Dorsolateral prefrontal cortex (tissue), 120 donors: ENCODE measurements at regions of chr15 and their contacts with region 1.

Region 1: DNA sequence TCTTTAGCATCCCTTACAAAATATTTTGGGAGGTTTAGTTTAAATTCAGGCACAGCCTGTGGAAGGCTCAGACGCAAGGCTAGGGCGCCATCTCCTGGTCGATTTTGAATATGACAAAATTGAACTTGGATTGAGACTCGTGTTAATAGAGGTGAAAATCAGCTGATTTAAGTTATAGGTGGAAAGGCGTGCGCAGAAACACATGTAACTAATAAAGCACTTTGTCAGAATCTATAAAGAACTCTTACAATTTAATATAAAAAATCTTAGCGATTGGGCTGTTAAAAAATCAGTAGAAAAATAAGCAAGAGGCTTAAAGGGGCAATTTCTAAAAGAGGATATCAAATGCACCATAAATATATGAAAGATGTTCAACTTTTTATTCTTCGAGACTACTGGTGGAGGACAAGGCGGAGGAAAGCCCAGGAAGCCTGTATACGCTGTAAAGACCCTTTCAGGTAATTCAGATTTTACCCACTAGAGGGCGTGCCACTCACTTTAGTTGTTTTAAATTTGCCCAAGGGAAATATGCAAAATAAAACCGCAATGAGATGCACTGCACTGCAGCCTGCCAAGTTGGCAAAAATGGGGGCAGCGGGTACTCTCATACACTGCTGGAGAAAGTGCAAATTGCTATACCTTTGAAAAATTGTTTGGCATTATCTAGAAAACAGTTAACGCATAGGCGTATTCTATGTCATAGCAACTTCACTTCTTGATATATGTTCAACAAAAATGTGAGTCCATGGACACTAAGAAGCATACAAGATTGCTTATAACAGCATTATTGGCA is 64.7 kb downstream of the SLC30A4 start:
- DNase-seq: peak in 7 of 10 donors; percentile 49 to 81 (median 61)
- H3K4me3 ChIP-seq: peak overlapping the region; percentile 34 to 77 (median 61)
- H3K27ac ChIP-seq: peak overlapping the region; percentile 1 to 97 (median 85)
- H3K27me3 ChIP-seq: no peaks in the 10 kb centered on the region
- CTCF ChIP-seq: peak; percentile 61 to 98 (median 84)

Region 2: GRCh38 chr15:45166834-45167630 is 290.8 kb before region 1 on chr15:
- intact Hi-C with region 1: loop called in 1 of 2 experiments (anchors 2 kb)
- DNase-seq: peak; percentile 59 to 89 (median 77)
- H3K4me3 ChIP-seq: peak overlapping the region; percentile 59 to 91 (median 75)
- H3K27ac ChIP-seq: peak overlapping the region; percentile 96 to 100 (median 99)
- H3K27me3 ChIP-seq: no peaks in the 10 kb centered on the region
- CTCF ChIP-seq: peak in 54 of 56 donors; percentile 18 to 70 (median 48)

Region 3: GRCh38 chr15:45307230-45307924 is 150.5 kb before region 1 on chr15:
- intact Hi-C with region 1: loop called in 1 of 2 experiments (anchors 10 kb)
- DNase-seq: no peak
- H3K4me3 ChIP-seq: peak overlapping the region in 50 of 59 donors; percentile 5 to 57 (median 38)
- H3K27ac ChIP-seq: peak overlapping the region in 41 of 59 donors; percentile 1 to 81 (median 46)
- H3K27me3 ChIP-seq: peaks cover 0 to 6% (median 0%) of the 10 kb centered on the region in 45 donors
- CTCF ChIP-seq: peak; percentile 55 to 85 (median 74)

Region 4: DNA sequence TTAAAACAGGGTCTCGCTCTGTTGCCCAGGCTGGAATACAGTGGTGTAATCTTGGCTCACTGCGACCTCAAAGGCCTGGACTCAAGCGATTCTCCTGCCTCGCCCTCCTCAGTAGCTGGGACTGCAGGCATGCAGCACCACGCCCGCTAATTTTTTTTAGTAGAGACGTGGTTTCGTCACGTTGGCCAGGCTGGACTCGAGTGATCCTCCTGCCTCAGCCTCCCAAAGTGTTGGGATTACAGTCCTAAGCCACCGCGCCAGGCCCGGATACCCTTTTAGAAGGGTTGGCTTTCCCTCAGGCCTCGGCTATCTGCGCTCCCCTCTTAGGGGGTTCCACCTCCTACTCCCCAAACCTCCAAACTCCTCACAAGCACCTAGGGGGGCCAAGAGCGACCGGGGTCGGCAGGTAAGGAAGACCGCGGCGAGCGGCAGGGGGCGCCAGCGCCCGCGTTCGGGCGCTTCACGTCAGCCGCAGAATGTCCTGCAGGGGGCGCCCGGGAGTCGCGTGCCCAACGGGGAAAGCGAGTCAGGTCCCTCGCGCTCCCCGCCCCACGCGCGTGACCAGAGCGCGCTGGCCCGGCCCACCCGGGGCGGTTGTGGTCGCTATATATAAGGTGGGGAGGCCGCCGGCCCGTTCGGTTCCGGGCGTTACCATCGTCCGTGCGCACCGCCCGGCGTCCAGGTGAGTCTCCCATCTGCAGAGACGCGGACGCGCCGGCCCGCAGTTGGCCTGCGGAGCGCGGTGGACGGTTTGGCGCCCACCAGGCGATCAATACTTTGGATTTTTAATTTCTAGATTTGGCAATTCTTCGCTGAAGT is 27.7 kb before region 1 on chr15:
- intact Hi-C with region 1: loop called in 1 of 2 experiments (anchors 2 kb)
- DNase-seq: peak in 7 of 10 donors; percentile 16 to 61 (median 45)
- H3K4me3 ChIP-seq: peak overlapping the region; percentile 9 to 67 (median 47)
- H3K27ac ChIP-seq: no peak overlapping the region
- H3K27me3 ChIP-seq: no peaks in the 10 kb centered on the region
- CTCF ChIP-seq: peak; percentile 39 to 99 (median 94)

Region 5: DNA sequence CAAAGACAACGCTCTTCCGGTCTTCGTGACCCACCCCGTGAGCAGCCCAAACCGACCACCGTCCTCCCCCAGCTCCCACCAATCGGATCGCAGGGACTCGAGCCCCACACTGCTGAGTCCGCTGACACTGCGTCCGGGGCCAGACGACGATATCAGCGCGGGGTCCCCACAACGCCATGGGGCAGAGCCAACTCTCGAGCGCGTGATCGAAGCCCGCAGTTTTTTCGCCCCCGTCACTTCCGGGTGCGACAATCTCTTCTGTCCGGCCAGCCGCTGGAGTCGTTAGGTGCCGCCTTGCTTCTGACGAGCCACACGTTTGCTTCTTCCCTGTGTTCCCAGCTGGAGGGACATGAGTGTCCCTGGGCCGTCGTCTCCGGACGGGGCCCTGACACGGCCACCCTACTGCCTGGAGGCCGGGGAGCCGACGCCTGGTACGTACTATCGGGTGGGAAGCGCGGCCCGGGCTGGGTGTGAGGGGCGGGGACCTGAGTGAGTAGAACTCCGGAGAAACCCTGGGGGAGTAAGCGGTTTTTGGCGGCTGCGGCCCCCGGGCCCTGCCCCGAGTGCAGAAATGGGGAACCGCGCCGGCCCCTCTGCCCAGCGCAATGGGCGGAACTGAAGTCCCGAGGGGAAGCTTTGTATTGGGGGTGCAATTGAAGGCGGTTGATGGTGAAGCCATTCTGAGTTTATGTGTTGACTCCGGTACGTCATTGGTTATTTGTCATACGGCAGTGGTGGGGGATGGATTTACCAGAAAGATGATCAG is 129.4 kb after region 1 on chr15 and contains the start of gene BLOC1S6:
- intact Hi-C with region 1: loop called (anchors 1 to 2 kb)
- DNase-seq: peak; percentile 84 to 94 (median 92)
- H3K4me3 ChIP-seq: peak within 1 kb of the TSS; percentile 68 to 99 (median 89)
- H3K27ac ChIP-seq: peak within 1 kb of the TSS; percentile 94 to 100 (median 99)
- H3K27me3 ChIP-seq: no peaks in the 10 kb centered on the region
- CTCF ChIP-seq: peak in 24 of 56 donors; percentile 2 to 51 (median 23)
- total RNA-seq, gene BLOC1S6: 30.3 to 80.3 (median 55.0) TPM

Region 6: DNA sequence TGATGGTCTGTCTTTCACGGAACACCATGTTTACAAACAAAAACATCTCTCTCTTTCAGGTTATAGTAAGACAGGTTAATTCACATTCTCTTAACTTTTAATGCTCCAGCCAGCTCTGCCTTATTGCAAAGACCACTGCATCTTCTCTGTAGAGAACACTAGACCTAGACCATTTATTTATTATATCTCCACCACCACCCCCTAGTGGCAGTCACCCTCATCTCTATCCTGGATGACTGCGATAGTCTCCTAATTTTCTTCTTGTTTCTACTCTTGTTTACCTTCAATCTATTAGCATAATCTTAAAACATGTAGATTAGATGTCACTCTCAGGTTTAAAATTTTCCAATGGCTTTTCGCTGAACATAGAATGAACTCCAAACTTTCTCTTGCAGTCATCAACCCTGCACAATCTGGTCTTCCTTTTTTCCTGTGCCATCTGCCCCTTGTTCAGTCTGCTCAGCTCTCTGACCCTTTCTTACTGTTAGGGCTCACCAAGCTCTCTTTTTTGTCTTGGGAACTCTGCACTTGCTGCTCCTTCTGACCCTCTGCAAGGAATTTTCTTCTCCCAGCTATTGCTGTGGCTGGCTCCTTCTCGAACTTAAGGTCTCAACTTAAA is 332.6 kb after region 1 on chr15:
- intact Hi-C with region 1: no loop called
- DNase-seq: peak in 1 of 10 donors; percentile 29
- H3K4me3 ChIP-seq: no peak overlapping the region
- H3K27ac ChIP-seq: no peak overlapping the region
- H3K27me3 ChIP-seq: peaks cover 0 to 18% (median 0%) of the 10 kb centered on the region in 45 donors
- CTCF ChIP-seq: peak; percentile 15 to 72 (median 53)